ENCODE measurements at regions of chr2 and their contacts with region 1.

Region 1: DNA sequence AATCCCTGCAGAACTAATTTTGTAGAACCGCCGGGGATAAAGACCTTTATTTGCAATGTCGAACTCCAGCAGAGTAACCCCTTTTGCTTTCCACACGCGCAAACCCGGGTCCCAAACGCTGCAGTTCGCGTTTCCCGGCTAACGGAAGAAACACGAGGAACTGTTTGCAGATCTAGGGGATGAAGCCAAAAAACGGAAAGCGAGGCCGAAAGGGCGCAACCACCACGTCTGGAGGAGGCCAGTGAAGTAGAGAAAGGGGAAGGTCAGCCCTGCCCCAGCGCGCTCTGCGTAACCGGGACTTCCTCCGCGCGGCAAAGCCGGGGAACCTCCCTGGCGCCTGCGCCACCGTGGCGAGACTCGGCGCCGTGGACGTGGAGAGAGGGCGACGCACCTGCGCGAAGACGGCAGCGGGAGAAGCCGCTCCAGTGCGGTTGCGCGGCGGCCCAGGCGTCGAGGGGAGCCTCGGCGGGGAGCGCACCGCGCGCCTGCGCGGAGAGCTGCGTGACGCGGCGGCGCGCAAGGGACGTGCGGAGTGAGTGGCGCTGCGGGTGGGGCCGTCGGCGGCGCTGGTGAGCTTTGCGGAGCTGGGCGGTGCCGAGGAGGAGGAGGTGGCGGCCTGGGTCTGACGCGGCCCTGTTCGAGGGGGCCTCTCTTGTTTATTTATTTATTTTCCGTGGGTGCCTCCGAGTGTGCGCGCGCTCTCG is at the start of gene PPP1CB:
- DNase-seq: peak; percentile 98
- ATAC-seq: peak; percentile 95
- total RNA-seq, gene PPP1CB: 434 TPM

Region 2: GRCh38 chr2:28594289-28595108 is 156.9 kb before region 1 on chr2:
- intact Hi-C with region 1: loop called (anchors 5 kb)
- DNase-seq: peak; percentile 94
- ATAC-seq: peak; percentile 80